CD4-positive, alpha-beta T cell (primary cell): ENCODE measurements at regions of chr6 and their contacts with region 1.

Region 1: DNA sequence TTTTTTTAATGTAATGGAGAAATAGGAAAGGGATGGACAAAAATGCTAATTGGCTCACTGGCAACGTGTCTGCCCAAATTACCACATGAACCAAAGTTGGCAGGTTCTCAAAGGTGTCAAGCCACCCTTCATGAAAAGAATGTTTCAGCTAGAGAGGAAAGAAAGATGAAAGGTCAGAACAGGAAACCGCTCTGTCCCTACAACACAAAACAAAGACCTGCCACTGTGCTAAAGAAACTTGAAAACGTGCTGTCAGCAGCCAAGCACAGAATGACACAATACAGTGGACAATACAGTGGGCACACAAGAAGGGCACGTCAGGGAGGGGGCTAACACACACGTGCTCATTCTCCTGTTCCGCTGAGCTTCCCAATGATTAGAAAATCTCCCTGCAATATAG is 4.9 kb downstream of the PREP start:
- DNase-seq: peak in 1 of 14 experiments; percentile 47
- ATAC-seq: no peak
- H3K4me3 ChIP-seq: no peak overlapping the region
- H3K4me3 Mint-ChIP-seq: peak overlapping the region; percentile 62
- H3K27ac ChIP-seq: no peak overlapping the region
- H3K27ac Mint-ChIP-seq: peak overlapping the region; percentile 50
- H3K4me1 ChIP-seq: peaks cover 37% of the 10 kb centered on the region
- H3K4me1 Mint-ChIP-seq: peaks cover 48% of the 10 kb centered on the region
- H3K27me3 ChIP-seq: no peaks in the 10 kb centered on the region
- H3K27me3 Mint-ChIP-seq: no peaks in the 10 kb centered on the region
- CTCF ChIP-seq: no peak

Region 2: DNA sequence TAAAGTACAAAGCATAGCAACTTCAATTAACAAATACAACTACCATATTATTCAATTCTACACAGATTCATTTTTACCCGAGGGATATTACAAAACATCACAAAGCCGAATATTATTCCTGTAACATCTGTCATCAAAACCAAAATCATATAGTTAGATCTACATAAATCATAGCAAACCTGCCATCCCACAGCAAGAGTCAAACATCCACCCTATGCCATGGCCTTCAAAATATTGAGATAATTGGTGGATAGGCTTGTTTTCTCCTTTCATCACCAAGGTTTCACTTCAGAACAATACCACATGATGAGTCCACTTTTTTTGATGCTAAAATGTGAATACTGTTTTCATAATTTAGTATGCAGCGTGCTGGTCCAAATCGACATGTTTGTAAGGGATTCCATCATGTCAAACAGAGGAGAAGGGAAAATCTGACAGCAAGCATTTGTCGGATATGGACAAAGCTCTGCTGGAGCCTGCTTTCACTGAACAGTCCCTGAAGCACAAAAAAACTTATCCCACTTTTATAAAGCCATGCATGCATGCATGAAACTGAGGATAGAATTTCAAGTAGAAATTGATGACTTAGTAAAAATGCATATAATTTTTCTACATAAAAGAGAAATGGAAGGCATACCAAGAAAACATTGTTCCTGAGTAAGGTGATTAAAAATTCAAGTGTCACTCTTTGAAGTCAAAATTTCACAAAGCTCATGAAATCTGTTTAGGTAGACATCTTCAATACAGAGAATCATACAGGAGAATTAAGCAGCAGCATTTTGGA is 1032.3 kb before region 1 on chr6:
- CTCF ChIA-PET with region 1: no interaction called
- POLR2A ChIA-PET with region 1: no interaction called
- intact Hi-C with region 1: no loop called
- DNase-seq: no peak
- ATAC-seq: no peak
- H3K4me3 ChIP-seq: no peak overlapping the region
- H3K4me3 Mint-ChIP-seq: no peak overlapping the region
- H3K27ac ChIP-seq: no peak overlapping the region
- H3K27ac Mint-ChIP-seq: no peak overlapping the region
- H3K4me1 ChIP-seq: no peaks in the 10 kb centered on the region
- H3K4me1 Mint-ChIP-seq: no peaks in the 10 kb centered on the region
- H3K27me3 ChIP-seq: no peaks in the 10 kb centered on the region
- H3K27me3 Mint-ChIP-seq: no peaks in the 10 kb centered on the region
- CTCF ChIP-seq: no peak

Region 3: GRCh38 chr6:104859225-104860146 is 538.5 kb before region 1 on chr6 and contains the start of gene HACE1:
- CTCF ChIA-PET with region 1: no interaction called
- POLR2A ChIA-PET with region 1: no interaction called
- intact Hi-C with region 1: loop called in 1 of 2 experiments (anchors 2 kb)
- DNase-seq: peak; percentile 76 to 91 (median 84)
- ATAC-seq: peak; percentile 98
- H3K4me3 ChIP-seq: peak within 1 kb of the TSS; percentile 80
- H3K4me3 Mint-ChIP-seq: peak within 1 kb of the TSS; percentile 96
- H3K27ac ChIP-seq: peak within 1 kb of the TSS in 1 of 2 donors; percentile 7
- H3K27ac Mint-ChIP-seq: peak within 1 kb of the TSS; percentile 70
- H3K4me1 ChIP-seq: peaks cover 12% of the 10 kb centered on the region
- H3K4me1 Mint-ChIP-seq: peaks cover 18% of the 10 kb centered on the region
- H3K27me3 ChIP-seq: no peaks in the 10 kb centered on the region
- H3K27me3 Mint-ChIP-seq: peaks cover 15% of the 10 kb centered on the region
- CTCF ChIP-seq: peak; percentile 17
- total RNA-seq, gene HACE1: 7.4 to 8.2 TPM